ENCODE measurements at regions of chr15 and their contacts with region 1.

Region 1: DNA sequence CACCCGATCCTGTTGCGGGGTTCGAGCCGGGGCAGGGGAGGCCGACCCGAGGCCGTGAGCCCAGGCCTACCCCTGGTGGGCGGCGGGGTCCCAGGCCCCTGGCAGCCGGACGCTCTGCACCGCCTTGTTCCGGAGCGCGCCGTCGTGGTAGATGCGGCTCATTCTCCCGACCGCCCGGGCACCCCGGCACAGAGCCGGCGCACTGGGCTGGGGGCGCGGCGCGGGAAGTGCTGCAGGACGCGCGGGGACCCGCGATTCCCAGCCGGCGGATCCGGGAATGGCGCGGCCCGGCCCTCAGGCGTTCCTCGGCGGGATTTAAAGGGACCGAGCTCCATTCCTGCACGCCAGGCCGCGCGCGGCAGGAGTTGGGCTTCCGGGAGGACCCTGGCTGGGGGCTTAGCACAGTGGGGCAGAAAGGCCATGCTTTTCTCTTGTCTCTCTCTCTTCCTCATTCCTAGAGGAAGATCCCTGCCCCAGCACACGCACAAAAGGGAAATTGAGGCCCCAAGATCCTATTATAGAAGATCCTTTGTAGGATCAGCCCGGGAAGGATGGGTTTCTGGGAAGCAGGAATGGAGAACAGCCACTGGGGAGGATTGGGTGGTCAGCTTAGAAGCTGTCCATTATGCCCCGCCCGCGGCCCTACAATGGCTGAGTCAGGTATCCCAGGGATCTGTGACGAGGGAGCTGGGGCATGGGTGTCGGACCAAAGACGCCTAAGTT is at the start of gene ARPIN:
- DNase-seq: peak; percentile 84
- ATAC-seq: peak; percentile 91
- total RNA-seq, gene ARPIN: 12.0 TPM

Region 2: GRCh38 chr15:89898614-89899294 is 14.1 kb before region 1 on chr15:
- intact Hi-C with region 1: no loop called
- DNase-seq: no peak
- ATAC-seq: no peak

Region 3: GRCh38 chr15:90064911-90065681 is 152.3 kb after region 1 on chr15:
- intact Hi-C with region 1: loop called (anchors 5 kb)
- DNase-seq: peak; percentile 90
- ATAC-seq: peak; percentile 65